ENCODE measurements at regions of chr6 and their contacts with region 1.

Region 1: GRCh38 chr6:2162089-2162465 is 83.3 kb downstream of the GMDS start:
- DNase-seq: no peak
- H3K4me3 ChIP-seq: no peak overlapping the region
- H3K4me3 Mint-ChIP-seq: no peak overlapping the region
- H3K27ac Mint-ChIP-seq: no peak overlapping the region
- H3K4me1 ChIP-seq: no peaks in the 10 kb centered on the region
- H3K4me1 Mint-ChIP-seq: no peaks in the 10 kb centered on the region
- H3K27me3 ChIP-seq: no peaks in the 10 kb centered on the region
- H3K27me3 Mint-ChIP-seq: no peaks in the 10 kb centered on the region
- CTCF ChIP-seq: no peak

Region 2: GRCh38 chr6:2179959-2180358 is 17.9 kb after region 1 on chr6:
- CTCF ChIA-PET with region 1: no interaction called
- POLR2A ChIA-PET with region 1: no interaction called
- intact Hi-C with region 1: loop called (anchors 1 kb)
- DNase-seq: no peak
- H3K4me3 ChIP-seq: no peak overlapping the region
- H3K4me3 Mint-ChIP-seq: no peak overlapping the region
- H3K27ac Mint-ChIP-seq: no peak overlapping the region
- H3K4me1 ChIP-seq: no peaks in the 10 kb centered on the region
- H3K4me1 Mint-ChIP-seq: no peaks in the 10 kb centered on the region
- H3K27me3 ChIP-seq: no peaks in the 10 kb centered on the region
- H3K27me3 Mint-ChIP-seq: no peaks in the 10 kb centered on the region
- CTCF ChIP-seq: no peak